ENCODE measurements at regions of chr7 and their contacts with region 1.

Region 1: DNA sequence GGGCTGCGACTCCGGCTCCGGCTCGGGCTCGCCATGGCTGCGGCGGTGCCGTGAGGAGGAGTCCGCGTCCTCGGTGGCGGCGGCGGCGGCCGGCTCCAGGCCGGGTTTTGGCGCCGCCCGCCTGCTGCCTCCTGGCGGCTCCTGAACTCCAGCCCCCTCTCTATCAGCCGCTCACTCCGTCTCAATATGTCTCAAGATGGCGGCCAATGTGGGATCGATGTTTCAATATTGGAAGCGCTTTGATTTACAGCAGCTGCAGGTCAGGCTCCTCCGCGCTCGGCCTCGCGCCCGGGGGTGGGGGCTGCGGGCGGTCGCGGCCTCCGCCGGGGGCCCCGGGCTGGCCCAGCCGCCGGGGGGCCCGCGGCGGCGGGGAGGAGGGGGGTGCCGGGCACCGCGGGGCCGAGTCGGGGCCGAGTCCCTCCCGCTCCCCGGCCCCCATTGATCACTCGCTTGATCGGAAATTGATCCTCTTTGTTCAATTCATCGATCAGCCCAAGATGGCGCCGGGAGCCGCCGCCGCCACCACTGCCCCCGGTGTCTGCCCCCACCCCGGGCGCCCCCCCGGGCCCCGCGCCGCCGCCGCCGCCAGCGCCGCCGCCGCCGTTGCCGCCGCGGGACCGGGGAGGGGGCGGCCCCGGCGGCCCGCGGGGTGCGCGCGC is 1.5 kb upstream of the CUX1 start:
- DNase-seq: peak; percentile 73
- ATAC-seq: peak; percentile 61
- H3K4me3 ChIP-seq: peak overlapping the region; percentile 49 to 57
- H3K27ac ChIP-seq: peak overlapping the region; percentile 77
- H3K4me1 ChIP-seq: peaks cover 24 to 50% of the 10 kb centered on the region in 2 experiments
- H3K27me3 ChIP-seq: no peaks in the 10 kb centered on the region
- CTCF ChIP-seq: no peak; a peak in 1 of 6 replicates
- POLR2A ChIP-seq: no peak
- RAD21 ChIP-seq: no peak

Region 2: GRCh38 chr7:101542527-101543241 is 273.3 kb before region 1 on chr7:
- CTCF ChIA-PET with region 1: interaction called, 4 read pairs
- POLR2A ChIA-PET with region 1: no interaction called
- RAD21 ChIA-PET with region 1: interaction called in 1 of 2 experiments, 3 read pairs
- intact Hi-C with region 1: loop called (anchors 2 kb)
- DNase-seq: peak; percentile 33
- ATAC-seq: peak; percentile 71
- H3K4me3 ChIP-seq: no peak overlapping the region
- H3K27ac ChIP-seq: no peak overlapping the region
- H3K4me1 ChIP-seq: peaks cover 0 to 18% of the 10 kb centered on the region in 2 experiments; a peak in 2 of 4 replicates
- H3K27me3 ChIP-seq: no peaks in the 10 kb centered on the region
- CTCF ChIP-seq: peak; percentile 79 to 89 (median 88); a peak in 5 of 6 replicates
- POLR2A ChIP-seq: no peak
- RAD21 ChIP-seq: peak; percentile 99

Region 3: GRCh38 chr7:101602484-101603241 is 213.3 kb before region 1 on chr7:
- CTCF ChIA-PET with region 1: interaction called, 4 read pairs
- POLR2A ChIA-PET with region 1: no interaction called
- RAD21 ChIA-PET with region 1: no interaction called
- intact Hi-C with region 1: loop called (anchors 2 kb)
- DNase-seq: peak; percentile 59
- ATAC-seq: peak; percentile 88
- H3K4me3 ChIP-seq: no peak overlapping the region
- H3K27ac ChIP-seq: no peak overlapping the region
- H3K4me1 ChIP-seq: peaks cover 19 to 30% of the 10 kb centered on the region in 2 experiments; a peak in 3 of 4 replicates
- H3K27me3 ChIP-seq: no peaks in the 10 kb centered on the region
- CTCF ChIP-seq: peak; percentile 82 to 96 (median 95)
- POLR2A ChIP-seq: no peak
- RAD21 ChIP-seq: peak; percentile 98

Region 4: DNA sequence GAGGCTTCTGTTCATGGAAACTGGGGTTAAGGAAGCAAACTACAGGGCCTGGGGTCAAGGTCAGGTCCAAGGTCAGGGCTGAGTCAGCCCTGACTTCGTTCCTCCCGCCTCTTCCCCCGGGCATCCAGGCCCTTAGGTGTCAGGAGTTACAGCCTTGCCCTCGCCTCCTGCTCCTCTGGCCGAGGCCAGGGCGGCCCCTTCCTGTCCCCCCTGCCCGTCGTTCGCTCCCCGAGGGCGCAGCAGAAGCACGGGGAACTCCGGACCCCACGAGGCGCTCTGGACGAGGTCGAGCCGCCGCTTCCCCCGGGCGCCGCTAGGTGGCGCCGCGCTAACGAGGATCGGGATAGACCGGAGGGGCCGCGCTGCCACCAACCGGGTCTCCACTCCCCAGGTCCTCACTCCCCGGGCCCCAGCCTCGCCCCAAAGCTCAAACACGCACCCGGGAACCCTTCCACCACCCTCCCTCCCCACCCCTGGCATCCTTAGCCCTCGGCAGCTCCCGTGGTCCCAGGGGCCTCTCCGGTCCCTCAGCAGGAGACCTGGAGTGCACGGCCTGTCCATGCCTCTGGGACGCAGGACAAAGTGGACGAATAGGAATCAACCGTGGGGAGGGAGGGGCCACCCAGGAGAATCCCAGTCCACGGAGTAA is 127.7 kb before region 1 on chr7:
- CTCF ChIA-PET with region 1: no interaction called
- POLR2A ChIA-PET with region 1: no interaction called
- RAD21 ChIA-PET with region 1: no interaction called
- intact Hi-C with region 1: loop called (anchors 1 kb)
- DNase-seq: peak; percentile 34
- ATAC-seq: peak; percentile 94
- H3K4me3 ChIP-seq: peak overlapping the region; percentile 27 to 42
- H3K27ac ChIP-seq: no peak overlapping the region; the same call in 1 of the 2 replicates
- H3K4me1 ChIP-seq: peaks cover 5 to 13% of the 10 kb centered on the region in 2 experiments; a peak in 3 of 4 replicates
- H3K27me3 ChIP-seq: no peaks in the 10 kb centered on the region
- CTCF ChIP-seq: peak; percentile 82 to 89 (median 84)
- POLR2A ChIP-seq: no peak
- RAD21 ChIP-seq: peak; percentile 98

Region 5: DNA sequence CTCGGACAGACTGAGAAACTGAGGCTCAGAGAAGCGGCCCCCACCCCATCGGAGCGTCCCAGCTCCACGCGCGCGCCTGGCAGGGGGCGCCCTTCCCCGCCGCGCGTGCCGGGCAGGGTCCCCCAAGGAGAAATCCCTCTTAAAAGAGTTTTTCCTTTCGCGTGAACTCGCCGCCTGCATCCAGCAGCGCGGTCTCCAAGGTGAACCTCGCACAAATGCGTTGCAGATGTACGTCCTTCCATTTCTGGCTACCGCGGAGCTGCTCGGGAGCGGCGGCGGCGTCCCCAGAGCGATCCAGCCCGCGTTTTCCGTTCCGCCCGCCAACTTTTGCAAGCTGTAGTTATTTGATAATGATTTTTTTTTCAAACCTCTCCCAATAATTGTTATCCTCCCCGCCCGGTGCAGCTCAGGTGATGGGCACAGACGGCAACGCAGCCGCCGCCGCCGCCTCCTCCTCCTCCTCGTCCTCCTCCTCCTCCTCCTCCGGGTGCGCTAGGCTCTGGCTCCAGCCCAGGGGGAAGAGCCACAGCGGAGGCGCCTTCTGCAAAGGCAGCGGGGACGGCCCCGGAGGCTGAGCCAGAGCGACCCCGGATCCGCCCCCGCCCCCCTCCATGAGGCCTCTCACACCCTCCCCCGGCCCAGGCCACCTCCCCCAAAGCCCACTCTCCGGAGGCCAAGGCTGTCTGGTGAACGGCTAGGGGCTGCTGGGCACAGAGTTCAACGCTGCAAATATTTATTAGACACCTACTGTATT is 72.5 kb before region 1 on chr7:
- CTCF ChIA-PET with region 1: interaction called, 7 read pairs
- POLR2A ChIA-PET with region 1: interaction called, 3 read pairs
- RAD21 ChIA-PET with region 1: interaction called, 3 to 4 read pairs
- intact Hi-C with region 1: loop called (anchors 1 kb)
- DNase-seq: no peak
- ATAC-seq: peak; percentile 81
- H3K4me3 ChIP-seq: peak overlapping the region; percentile 49 to 61
- H3K27ac ChIP-seq: peak overlapping the region; percentile 57
- H3K4me1 ChIP-seq: peaks cover 22 to 34% of the 10 kb centered on the region in 2 experiments
- H3K27me3 ChIP-seq: no peaks in the 10 kb centered on the region
- CTCF ChIP-seq: peak; percentile 23 to 57 (median 46); a peak in 4 of 6 replicates
- POLR2A ChIP-seq: no peak
- RAD21 ChIP-seq: peak; percentile 50

Region 6: DNA sequence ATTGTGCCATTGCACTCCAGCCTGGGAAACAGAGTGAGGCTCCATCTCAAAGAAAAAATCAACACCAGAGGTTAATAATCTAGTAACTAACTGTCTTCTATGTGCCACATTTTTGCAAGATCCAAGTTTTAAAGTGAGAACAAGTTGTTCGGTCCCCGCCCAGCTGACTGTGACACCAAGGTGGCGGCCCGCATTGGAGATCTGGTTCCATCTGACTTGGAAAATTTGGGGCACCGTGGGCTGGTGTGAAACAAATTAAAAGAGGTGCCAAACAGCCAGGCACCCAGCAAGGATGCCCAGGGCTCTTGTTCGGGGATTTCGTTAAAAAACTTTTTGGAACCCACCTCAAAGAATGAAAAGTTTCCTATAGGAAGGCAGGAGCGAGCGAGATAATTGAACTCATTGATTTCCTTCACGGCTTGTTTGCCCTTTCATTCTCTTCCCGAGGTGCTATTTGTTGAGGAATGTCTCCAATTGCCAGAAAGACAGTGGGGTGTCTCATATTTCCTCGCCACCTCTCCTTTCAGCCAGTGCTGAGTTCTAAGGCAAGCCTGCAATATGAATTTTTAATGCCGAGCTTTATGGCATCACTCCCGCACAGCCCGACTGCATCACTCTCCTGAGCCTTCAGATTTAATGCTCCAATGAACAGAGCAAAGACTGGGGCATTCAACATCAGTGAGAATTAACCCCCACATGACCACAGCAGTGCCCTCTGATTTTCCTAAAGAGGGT is 313.8 kb after region 1 on chr7:
- CTCF ChIA-PET with region 1: interaction called, 3 read pairs
- POLR2A ChIA-PET with region 1: no interaction called
- RAD21 ChIA-PET with region 1: no interaction called
- intact Hi-C with region 1: loop called (anchors 10 kb)
- DNase-seq: no peak
- ATAC-seq: no peak
- H3K4me3 ChIP-seq: no peak overlapping the region
- H3K27ac ChIP-seq: no peak overlapping the region
- H3K4me1 ChIP-seq: peaks cover 20 to 43% of the 10 kb centered on the region in 2 experiments
- H3K27me3 ChIP-seq: no peaks in the 10 kb centered on the region
- CTCF ChIP-seq: no peak
- POLR2A ChIP-seq: no peak
- RAD21 ChIP-seq: no peak